Stomach (tissue), 19 donors: ENCODE measurements at regions of chr2 and their contacts with region 1.

Region 1: DNA sequence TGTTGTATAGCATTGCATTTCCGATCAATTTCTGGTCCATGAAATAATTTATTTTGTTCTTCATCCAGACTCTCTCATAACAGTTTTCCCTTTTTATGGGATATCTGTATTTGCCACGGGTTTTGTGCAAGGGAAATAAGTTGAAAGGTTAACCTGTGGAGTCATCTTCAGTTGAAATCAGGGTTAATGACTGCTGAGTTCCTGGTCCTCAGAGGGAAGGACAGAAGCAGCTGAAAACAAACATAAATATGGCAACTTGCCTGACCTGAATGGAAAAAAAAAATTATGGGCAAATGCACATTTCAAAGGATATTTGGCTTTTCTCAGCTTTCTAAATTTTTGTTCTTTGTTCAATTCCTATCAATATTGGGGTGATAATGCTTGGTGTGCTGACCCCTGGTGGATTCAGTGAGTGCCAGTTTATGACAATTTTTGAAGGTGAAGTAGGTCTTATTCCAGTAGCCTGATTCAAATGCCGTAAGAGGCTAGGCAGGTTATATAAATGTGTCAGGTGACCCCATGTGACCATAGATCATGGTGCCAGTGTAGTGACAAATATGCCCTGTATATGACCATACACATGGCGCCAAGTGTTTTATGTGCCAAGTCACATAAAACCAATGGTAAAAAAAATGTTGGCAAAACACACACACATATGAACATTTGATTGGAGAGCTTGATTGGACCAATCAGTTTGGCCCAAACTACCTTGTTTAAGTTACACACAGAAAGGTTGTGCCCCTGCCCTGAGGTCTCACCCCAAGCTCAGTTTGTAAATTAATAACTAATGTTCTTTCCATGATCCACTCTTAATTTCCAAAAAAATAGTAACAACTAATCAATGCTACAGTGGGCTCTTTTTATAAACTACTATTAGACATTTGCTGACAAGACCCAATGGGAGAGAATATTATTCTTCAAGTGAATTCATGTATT is 47.6 kb upstream of the FAM124B start:
- DNase-seq: peak in 1 of 2 donors; percentile 46
- H3K4me3 ChIP-seq: no peak overlapping the region
- H3K27ac ChIP-seq: no peak overlapping the region
- H3K4me1 ChIP-seq: no peaks in the 10 kb centered on the region
- H3K27me3 ChIP-seq: no peaks in the 10 kb centered on the region
- CTCF ChIP-seq: peak in 4 of 7 experiments; percentile 23 to 55 (median 31)
- EP300 ChIP-seq: no peak
- POLR2A ChIP-seq: no peak

Region 2: DNA sequence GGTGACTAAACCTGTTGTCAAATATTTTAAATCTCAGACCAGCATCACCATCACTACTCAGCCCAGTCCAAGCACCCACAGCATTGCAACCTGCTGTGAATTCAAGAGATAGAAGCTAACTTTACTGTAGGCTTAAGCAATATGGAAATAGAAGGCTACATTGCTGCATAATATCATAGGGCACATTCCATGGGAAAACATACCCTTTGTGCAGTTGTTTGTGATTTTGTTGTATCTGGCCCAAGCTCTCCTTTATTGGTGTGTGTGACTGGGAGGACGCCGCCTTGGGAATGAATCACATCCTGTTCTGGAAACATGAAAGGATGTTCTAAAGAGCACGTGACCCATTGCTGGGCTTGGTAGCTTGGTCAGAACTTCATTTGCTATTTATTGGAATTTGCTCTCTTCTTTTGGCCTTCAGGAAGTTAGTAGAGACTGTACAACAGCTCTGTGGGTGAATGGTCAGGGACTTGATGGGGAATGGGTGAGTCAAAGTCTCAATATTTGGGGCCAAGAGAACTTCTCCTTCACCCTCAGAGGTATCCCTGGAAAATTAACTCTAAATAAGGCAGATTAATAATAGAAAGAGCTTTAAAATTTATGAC is 303.6 kb before region 1 on chr2:
- intact Hi-C with region 1: no loop called
- DNase-seq: no peak
- H3K4me3 ChIP-seq: no peak overlapping the region
- H3K27ac ChIP-seq: no peak overlapping the region
- H3K4me1 ChIP-seq: no peaks in the 10 kb centered on the region
- H3K27me3 ChIP-seq: peaks cover 0 to 7% (median 0%) of the 10 kb centered on the region in 3 donors
- CTCF ChIP-seq: no peak
- EP300 ChIP-seq: no peak
- POLR2A ChIP-seq: no peak

Region 3: DNA sequence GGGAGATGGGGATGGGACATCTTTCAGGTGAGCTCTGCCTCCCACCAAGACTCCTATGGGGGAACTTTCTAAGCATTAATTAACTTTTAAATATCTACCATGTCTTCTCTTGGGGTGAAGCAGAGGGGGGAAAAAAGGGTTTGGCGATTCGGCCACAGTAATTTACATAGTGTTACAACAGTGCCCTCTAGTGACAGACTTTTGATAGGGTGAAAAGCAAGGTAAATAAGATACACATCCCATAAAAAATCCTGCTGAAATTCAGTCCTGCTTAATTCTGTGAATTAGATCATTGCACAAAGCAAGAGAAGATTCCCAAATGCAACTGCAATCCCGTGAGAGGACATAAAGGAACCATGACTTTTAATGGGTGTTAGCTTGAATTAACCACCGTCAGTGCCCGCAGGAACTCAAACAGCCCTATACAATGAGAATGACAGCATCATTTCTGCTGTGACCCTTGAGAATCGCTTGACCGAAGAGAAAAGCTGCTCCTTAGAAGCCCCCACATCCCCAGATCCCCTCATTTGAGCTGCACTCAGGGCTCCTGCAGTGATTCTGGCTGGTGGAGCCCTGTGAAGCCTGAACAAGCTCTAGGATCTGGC is 80.3 kb before region 1 on chr2:
- intact Hi-C with region 1: loop called (anchors 10 kb)
- DNase-seq: peak in 1 of 2 donors; percentile 66
- H3K4me3 ChIP-seq: no peak overlapping the region
- H3K27ac ChIP-seq: no peak overlapping the region
- H3K4me1 ChIP-seq: peaks cover 0 to 3% (median 0%) of the 10 kb centered on the region in 4 donors
- H3K27me3 ChIP-seq: no peaks in the 10 kb centered on the region
- CTCF ChIP-seq: peak in 4 of 7 experiments; percentile 38 to 72 (median 54)
- EP300 ChIP-seq: no peak
- POLR2A ChIP-seq: no peak

Region 4: DNA sequence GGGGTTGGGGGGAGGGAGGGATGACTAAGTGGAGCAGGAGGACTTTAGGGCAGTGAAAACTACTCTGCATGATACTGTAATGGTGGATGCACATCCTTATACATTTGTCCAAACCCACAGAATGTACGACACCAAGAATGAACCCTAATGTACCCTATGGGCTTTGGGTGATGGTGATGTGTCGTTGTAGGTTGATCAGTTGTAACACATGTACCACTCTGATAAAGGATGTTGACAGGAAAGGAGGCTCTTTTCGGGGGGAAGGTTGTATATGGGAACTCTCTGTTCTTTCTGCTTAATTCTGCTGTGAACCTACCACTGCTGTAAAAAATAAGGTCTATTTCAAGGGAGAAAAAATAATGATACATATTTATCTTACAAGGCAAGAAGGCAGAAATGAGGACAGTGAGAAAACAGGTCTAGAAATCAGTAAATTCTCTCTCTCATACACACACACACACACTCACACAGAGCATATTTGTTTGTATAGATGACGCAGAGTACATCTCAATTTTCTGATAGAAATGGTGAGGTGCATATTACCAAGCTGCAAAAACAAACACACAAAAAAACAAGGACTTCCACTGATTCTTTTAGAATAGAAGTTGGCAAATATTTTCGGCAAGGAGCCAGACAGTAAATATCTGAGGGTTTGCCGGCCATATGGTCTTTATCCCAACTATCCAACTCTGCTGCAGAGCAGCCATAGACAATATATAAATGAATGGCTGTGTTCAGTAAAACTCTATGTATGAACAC is 67.8 kb before region 1 on chr2:
- intact Hi-C with region 1: no loop called
- DNase-seq: peak in 1 of 2 donors; percentile 63
- H3K4me3 ChIP-seq: no peak overlapping the region
- H3K27ac ChIP-seq: no peak overlapping the region
- H3K4me1 ChIP-seq: peaks cover 0 to 3% (median 0%) of the 10 kb centered on the region in 4 donors
- H3K27me3 ChIP-seq: no peaks in the 10 kb centered on the region
- CTCF ChIP-seq: no peak
- EP300 ChIP-seq: no peak
- POLR2A ChIP-seq: no peak

Region 5: GRCh38 chr2:224576088-224576715 is 126.7 kb after region 1 on chr2:
- intact Hi-C with region 1: no loop called
- DNase-seq: no peak
- H3K4me3 ChIP-seq: no peak overlapping the region
- H3K27ac ChIP-seq: no peak overlapping the region
- H3K4me1 ChIP-seq: peaks cover 42 to 99% (median 75%) of the 10 kb centered on the region in 4 donors
- H3K27me3 ChIP-seq: no peaks in the 10 kb centered on the region
- CTCF ChIP-seq: no peak
- EP300 ChIP-seq: no peak
- POLR2A ChIP-seq: no peak

Region 6: GRCh38 chr2:224885836-224886547 is 436.5 kb after region 1 on chr2:
- intact Hi-C with region 1: no loop called
- DNase-seq: no peak
- H3K4me3 ChIP-seq: no peak overlapping the region
- H3K27ac ChIP-seq: no peak overlapping the region
- H3K4me1 ChIP-seq: peaks cover 0 to 3% (median 0%) of the 10 kb centered on the region in 4 donors
- H3K27me3 ChIP-seq: no peaks in the 10 kb centered on the region
- CTCF ChIP-seq: no peak
- EP300 ChIP-seq: no peak
- POLR2A ChIP-seq: no peak